ENCODE measurements at regions of chr5 and their contacts with region 1.

Region 1: DNA sequence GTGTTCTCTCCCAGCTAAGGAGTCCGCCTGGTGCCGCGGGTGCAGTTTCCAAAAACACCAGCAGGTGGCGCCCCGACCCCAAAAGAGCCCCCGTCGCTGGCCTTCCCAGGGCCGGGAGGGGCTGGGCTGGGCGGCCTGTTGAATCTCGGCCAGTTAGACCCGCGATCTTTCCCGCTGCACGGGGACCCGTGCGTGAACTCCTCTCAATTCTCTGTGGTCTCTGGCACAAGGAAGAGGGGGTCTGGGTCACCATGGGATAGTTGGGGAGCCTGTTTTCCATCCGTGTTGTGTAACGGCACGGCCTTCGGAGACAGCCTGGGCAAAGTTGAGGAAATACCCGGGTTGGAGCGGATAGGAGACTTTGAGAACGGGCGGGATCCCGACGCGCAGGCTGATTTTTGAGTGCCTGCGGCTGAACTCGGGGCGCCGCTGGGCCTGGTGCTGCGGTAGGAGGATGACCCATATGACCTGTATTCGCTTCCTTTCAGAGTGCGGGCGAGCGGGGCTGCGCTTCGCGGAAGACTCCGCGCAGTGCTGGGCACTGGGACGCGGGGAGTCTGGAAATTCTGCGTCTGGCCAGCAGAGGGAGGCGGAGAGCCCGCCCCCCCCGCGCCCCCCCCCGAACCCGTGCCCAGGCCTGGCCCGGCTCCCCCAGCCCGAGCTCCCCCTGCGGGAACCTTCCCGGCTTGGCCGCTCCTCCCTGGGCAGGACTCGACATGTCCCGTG is 7.9 kb upstream of the PSD2 start:
- DNase-seq: peak; percentile 54
- ATAC-seq: peak; percentile 90
- H3K4me3 ChIP-seq: peak overlapping the region; percentile 58 to 63
- H3K27ac ChIP-seq: peak overlapping the region; percentile 47; the same call in 1 of the 2 replicates
- H3K4me1 ChIP-seq: peaks cover 3 to 10% of the 10 kb centered on the region in 2 experiments; a peak in 2 of 4 replicates
- H3K27me3 ChIP-seq: no peaks in the 10 kb centered on the region
- CTCF ChIP-seq: peak; percentile 86 to 99 (median 95)
- POLR2A ChIP-seq: no peak
- RAD21 ChIP-seq: peak; percentile 99

Region 2: DNA sequence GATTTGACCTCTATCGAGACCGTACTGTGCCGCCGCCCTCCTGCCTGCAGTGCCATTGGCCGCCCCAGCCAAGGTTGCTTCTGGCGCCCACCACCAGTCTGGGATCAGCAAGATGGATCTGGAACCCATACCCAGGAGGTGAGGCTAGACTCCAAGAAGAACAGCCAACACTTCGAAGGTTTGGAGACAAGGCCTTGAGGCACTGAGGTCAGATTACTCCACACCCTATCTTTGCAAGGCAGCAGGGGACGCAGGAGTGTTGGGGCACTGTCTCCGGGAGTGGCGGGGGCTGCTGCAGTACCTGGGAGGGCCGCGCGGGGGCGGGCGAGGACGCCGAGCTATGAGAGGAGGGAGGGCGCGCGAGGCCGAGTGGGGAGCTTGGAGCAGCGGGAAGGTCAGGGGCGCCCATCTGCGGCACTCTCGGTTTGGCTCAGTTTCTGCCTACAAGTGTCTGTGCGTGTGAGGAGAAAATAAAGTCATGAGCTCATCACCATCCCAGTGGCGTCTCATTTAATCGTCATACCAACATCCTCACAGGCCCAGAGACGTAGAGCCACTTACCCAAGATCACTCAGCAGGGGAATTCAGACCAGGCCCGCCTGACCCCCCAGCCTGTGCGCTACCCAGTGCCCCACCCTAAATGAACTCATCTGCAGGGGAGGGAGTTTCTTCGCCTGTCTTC is 12.6 kb before region 1 on chr5:
- CTCF ChIA-PET with region 1: interaction called, 16 read pairs
- POLR2A ChIA-PET with region 1: interaction called, 5 read pairs
- RAD21 ChIA-PET with region 1: no interaction called
- intact Hi-C with region 1: no loop called
- DNase-seq: no peak
- ATAC-seq: peak; percentile 98
- H3K4me3 ChIP-seq: no peak overlapping the region
- H3K27ac ChIP-seq: no peak overlapping the region
- H3K4me1 ChIP-seq: peaks cover 0 to 9% of the 10 kb centered on the region in 2 experiments; a peak in 1 of 4 replicates
- H3K27me3 ChIP-seq: no peaks in the 10 kb centered on the region
- CTCF ChIP-seq: peak; percentile 95 to 97 (median 96)
- POLR2A ChIP-seq: no peak
- RAD21 ChIP-seq: peak; percentile 76

Region 3: GRCh38 chr5:139844472-139845145 is 56.9 kb after region 1 on chr5:
- CTCF ChIA-PET with region 1: interaction called, 12 read pairs
- POLR2A ChIA-PET with region 1: no interaction called
- RAD21 ChIA-PET with region 1: interaction called in 1 of 2 experiments, 3 read pairs
- intact Hi-C with region 1: loop called (anchors 1 kb)
- DNase-seq: peak; percentile 79
- ATAC-seq: peak; percentile 74
- H3K4me3 ChIP-seq: no peak overlapping the region
- H3K27ac ChIP-seq: no peak overlapping the region
- H3K4me1 ChIP-seq: peaks cover 0 to 13% of the 10 kb centered on the region in 2 experiments; a peak in 2 of 4 replicates
- H3K27me3 ChIP-seq: no peaks in the 10 kb centered on the region
- CTCF ChIP-seq: peak; percentile 92 to 96 (median 95)
- POLR2A ChIP-seq: no peak
- RAD21 ChIP-seq: peak; percentile 88

Region 4: GRCh38 chr5:139863855-139864558 is 76.3 kb after region 1 on chr5:
- CTCF ChIA-PET with region 1: interaction called, 18 read pairs
- POLR2A ChIA-PET with region 1: no interaction called
- RAD21 ChIA-PET with region 1: interaction called, 3 to 5 read pairs
- intact Hi-C with region 1: loop called (anchors 1 kb)
- DNase-seq: no peak
- ATAC-seq: peak; percentile 88
- H3K4me3 ChIP-seq: no peak overlapping the region
- H3K27ac ChIP-seq: no peak overlapping the region
- H3K4me1 ChIP-seq: no peaks in the 10 kb centered on the region; a peak in 1 of 4 replicates
- H3K27me3 ChIP-seq: no peaks in the 10 kb centered on the region
- CTCF ChIP-seq: peak; percentile 85 to 90 (median 88)
- POLR2A ChIP-seq: no peak
- RAD21 ChIP-seq: peak; percentile 85

Measured in HCT116 (cell line).